MCF 10A (cell line): ENCODE measurements at regions of chr3 and their contacts with region 1.

Region 1: DNA sequence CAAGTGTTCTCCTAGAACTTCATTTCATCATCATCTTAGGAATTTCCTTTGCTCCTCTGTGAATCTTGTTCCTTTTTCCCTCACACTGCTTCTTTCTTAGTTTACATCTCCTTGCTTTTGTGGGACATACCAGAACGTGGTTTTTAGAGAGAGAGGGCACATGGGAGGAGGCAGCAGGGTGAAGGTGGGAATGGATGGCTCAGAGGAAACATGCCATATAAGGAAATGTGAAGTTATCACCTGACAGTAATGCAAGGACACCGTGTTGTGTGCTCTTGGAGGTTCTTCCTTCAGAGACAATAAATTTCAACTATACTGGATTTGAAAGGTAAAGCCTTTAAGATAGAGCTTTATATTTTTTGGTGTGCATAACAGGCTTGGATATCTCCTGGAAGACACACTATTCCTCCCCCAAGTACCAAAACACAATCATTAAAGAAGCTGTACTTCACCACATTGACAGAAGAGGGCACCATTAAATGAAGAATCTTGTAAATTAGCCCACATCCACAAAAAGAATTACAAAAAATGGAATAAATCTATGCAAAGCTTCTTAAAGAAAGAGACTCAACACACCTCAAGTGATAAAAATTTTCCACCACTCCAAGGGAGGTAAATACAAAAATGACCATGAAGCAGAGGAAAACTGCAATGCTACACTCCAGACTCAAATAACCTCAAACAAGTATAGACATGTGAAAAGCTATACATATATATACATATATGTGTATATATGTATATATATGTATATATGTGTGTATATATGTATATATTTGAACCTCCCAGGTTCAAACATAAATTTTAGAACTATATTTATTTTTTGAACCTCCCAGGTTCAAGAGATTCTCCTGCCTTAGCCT is 26.1 kb downstream of the RPL39L start:
- DNase-seq: peak; percentile 63
- H3K4me3 Mint-ChIP-seq: no peak overlapping the region
- H3K27ac Mint-ChIP-seq: no peak overlapping the region
- H3K4me1 Mint-ChIP-seq: peaks cover 9% of the 10 kb centered on the region
- H3K27me3 Mint-ChIP-seq: no peaks in the 10 kb centered on the region
- CTCF ChIP-seq: peak; percentile 68

Region 2: DNA sequence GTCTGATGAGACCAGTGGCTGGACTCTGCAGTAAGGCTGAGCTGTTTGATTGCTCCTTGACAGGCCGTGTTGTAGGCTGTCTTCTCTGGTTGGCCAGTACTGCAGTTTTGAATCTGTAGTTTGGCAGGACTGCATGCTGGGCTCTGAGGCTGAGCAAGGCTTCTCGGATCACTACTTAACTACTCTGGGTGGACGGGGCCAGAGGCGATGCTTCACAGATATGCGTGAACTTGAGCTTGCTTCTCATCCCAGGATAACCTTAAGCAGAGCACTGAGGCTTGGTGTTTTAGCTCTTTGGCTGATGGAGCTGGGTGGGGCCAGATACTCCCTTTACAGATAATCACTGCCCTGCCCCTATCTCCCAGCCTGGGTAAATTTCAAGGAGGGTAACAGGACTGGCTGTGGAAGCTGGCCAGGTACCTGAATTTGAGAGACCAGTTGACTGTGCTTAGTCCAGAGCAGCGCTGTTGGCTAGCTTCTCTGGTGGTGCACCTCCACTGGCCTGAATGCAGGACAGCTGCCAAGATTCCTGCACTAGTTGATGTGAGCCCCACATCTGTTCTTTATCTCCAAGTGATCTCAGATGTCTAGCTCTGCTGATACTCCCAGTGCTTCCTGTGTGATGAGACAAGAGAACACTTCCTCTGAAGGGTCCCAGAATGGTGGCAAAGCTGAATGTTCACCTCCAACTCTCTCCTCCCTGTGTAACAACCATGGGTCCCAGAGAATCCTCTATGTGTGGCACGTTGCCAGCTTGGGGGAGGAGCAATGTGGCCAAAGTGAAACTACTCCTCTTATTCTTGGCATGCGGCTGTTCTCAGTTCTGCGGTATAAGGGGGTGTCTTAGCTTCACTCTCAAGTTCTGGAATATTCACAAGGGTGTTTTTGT is 11.7 kb before region 1 on chr3:
- CTCF ChIA-PET with region 1: interaction called, 62 read pairs
- POLR2A ChIA-PET with region 1: interaction called, 6 read pairs
- intact Hi-C with region 1: no loop called
- DNase-seq: peak; percentile 78
- H3K4me3 Mint-ChIP-seq: peak overlapping the region; percentile 73
- H3K27ac Mint-ChIP-seq: peak overlapping the region; percentile 85
- H3K4me1 Mint-ChIP-seq: peaks cover 8% of the 10 kb centered on the region
- H3K27me3 Mint-ChIP-seq: no peaks in the 10 kb centered on the region
- CTCF ChIP-seq: no peak

Region 3: GRCh38 chr3:187130346-187131066 is 17.3 kb after region 1 on chr3:
- CTCF ChIA-PET with region 1: interaction called, 18 read pairs
- POLR2A ChIA-PET with region 1: interaction called, 5 read pairs
- intact Hi-C with region 1: loop called (anchors 2 kb)
- DNase-seq: peak; percentile 56
- H3K4me3 Mint-ChIP-seq: peak overlapping the region; percentile 47
- H3K27ac Mint-ChIP-seq: peak overlapping the region; percentile 86
- H3K4me1 Mint-ChIP-seq: peaks cover 12% of the 10 kb centered on the region
- H3K27me3 Mint-ChIP-seq: no peaks in the 10 kb centered on the region
- CTCF ChIP-seq: no peak

Region 4: GRCh38 chr3:187164885-187165543 is 51.9 kb after region 1 on chr3:
- CTCF ChIA-PET with region 1: interaction called, 96 read pairs
- POLR2A ChIA-PET with region 1: interaction called, 11 read pairs
- intact Hi-C with region 1: loop called (anchors 1 kb)
- DNase-seq: peak; percentile 80
- H3K4me3 Mint-ChIP-seq: no peak overlapping the region
- H3K27ac Mint-ChIP-seq: no peak overlapping the region
- H3K4me1 Mint-ChIP-seq: peaks cover 10% of the 10 kb centered on the region
- H3K27me3 Mint-ChIP-seq: peaks cover 15% of the 10 kb centered on the region
- CTCF ChIP-seq: peak; percentile 54